ENCODE measurements at regions of chr3 and their contacts with region 1.

Region 1: GRCh38 chr3:42961633-42962032 is 17.5 kb upstream of the GASK1A start:
- DNase-seq: peak in 4 of 5 donors; percentile 33 to 72 (median 47)
- H3K4me3 ChIP-seq: no peak overlapping the region
- H3K27ac ChIP-seq: no peak overlapping the region
- H3K4me1 ChIP-seq: peaks cover 1% of the 10 kb centered on the region
- H3K27me3 ChIP-seq: no peaks in the 10 kb centered on the region
- CTCF ChIP-seq: peak in 2 of 3 donors; percentile 61 to 76
- EP300 ChIP-seq: no peak
- POLR2A ChIP-seq: no peak

Region 2: DNA sequence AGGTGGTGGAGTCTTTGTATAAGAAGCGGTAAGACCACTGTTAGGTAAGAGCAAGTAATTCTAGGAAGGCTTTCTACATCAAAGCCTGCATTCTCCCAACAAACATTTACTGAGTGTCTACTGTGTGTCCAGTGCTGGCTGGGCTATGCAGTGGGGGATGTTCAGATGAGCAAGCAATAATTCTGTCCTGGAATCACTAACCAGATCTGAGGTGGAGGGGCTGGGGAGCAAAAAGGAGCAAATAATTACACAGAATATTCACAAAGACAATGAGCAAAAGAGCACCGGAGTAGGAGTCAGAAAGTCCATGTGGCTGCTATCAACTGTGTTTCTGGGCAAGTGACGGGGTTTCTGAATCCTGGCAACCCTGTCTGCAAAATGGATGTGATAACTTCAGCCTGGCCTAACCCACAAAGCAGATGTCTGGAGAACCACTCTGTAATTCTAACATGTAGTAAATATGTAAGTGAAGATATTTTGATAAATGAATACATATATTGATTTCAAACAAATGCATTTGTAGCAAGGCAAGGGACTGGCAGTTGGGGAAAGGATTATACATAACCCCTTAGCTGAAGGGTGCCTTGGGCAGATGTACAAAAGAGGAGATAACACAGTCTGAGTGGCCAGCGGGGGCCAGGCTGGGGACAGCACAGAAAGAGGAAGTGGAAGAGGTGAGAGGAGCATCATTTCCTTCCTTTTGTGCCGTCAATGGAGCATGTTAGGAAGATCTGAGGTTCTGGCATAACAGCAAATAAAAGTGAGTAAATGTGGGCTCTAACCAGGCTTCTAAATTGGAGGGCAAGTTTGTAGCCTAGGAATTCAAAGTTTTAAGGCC is 114.7 kb before region 1 on chr3:
- intact Hi-C with region 1: no loop called
- DNase-seq: no peak
- H3K4me3 ChIP-seq: no peak overlapping the region
- H3K27ac ChIP-seq: no peak overlapping the region
- H3K4me1 ChIP-seq: peaks cover 3% of the 10 kb centered on the region
- H3K27me3 ChIP-seq: no peaks in the 10 kb centered on the region
- CTCF ChIP-seq: no peak
- EP300 ChIP-seq: no peak
- POLR2A ChIP-seq: no peak

Region 3: DNA sequence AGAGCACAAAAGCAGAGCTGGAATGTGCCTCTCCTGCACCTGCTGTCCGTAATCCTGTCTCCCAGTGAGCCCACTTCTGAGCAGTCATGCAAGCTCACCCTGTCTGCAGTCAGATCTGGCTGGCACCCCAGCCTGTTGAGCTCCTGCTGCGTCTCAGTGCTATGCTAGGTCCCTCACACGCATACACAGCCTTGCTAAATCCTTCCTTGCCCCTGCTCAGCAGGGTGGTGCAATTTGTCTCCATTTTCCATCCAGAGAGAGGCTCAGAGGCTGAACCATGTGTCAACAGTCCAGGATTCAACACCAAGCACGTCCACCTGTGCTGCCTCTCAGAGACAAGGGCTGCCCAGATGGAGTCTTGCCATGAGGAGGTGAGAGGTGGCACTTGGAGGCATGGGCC is 133.2 kb after region 1 on chr3:
- intact Hi-C with region 1: loop called in 1 of 4 experiments (anchors 10 kb)
- DNase-seq: no peak
- H3K4me3 ChIP-seq: no peak overlapping the region
- H3K27ac ChIP-seq: no peak overlapping the region
- H3K4me1 ChIP-seq: peaks cover 5% of the 10 kb centered on the region
- H3K27me3 ChIP-seq: no peaks in the 10 kb centered on the region
- CTCF ChIP-seq: no peak
- EP300 ChIP-seq: no peak
- POLR2A ChIP-seq: no peak

Region 4: DNA sequence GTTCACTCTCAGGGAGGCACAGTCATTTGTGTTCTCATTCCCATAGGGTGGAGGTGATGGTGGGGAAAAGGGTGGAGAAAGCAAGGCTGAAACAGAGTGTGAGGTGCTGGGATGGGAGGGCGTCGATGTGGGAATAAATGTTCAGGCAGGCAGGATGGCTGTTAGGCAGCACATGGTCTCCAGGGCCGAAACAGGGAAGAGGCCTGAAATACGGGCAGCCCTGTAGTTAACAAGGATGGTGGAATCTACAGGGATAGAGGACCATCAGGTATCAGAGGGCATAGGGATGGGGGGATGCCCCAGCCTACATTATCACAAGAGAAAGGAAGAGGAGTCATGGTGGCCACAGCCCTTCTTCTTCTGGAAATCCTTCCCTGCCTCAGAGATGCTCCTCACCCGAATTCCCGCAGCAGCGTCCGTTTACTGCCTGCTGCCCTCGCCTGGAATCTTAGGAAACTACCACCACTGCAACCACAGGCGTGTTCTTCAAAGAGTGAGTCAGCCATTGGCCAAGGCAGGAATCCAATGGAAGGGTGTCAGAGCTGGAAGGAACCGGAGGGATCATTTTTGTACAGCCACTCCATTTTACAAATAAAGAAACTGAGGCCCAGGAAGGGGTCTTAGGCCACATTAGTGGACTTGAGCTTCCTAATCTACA is 194.0 kb after region 1 on chr3:
- intact Hi-C with region 1: loop called (anchors 5 to 10 kb)
- DNase-seq: peak; percentile 52 to 80 (median 77)
- H3K4me3 ChIP-seq: no peak overlapping the region
- H3K27ac ChIP-seq: peak overlapping the region in 1 of 2 donors; percentile 67
- H3K4me1 ChIP-seq: peaks cover 13% of the 10 kb centered on the region
- H3K27me3 ChIP-seq: no peaks in the 10 kb centered on the region
- CTCF ChIP-seq: peak in 2 of 3 donors; percentile 37 to 63
- EP300 ChIP-seq: no peak
- POLR2A ChIP-seq: no peak

Region 5: DNA sequence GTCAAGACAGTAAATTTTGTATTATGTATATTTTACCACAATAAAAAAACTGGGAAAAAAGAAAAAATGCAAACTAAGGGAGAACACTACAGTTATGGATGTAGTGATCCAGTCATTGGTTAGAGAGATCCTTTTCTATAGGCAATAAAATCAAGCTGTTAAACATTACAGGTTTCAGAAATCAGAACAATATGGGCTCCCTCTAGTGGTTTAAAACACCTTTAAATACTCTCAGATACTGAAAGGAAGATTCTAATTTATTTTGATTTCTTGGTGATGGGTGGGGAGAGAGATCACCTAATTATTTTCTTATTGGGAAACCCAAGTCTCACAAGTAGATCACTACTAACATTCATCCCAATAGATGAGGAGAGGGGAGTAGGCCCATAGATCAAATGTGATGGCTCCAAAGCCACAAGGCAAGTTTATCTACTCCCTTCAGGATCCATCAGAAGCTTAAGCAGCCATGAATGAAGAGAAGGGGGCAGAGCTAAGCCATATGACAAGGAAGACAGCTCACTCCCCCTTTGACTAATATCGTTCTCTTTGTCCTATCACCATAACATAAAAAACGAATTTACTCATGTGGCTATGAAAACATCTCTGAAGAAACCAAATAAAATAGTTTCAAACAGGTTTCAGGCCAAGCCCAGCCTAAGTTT is 541.6 kb after region 1 on chr3:
- intact Hi-C with region 1: loop called in 1 of 4 experiments (anchors 10 kb)
- DNase-seq: no peak
- H3K4me3 ChIP-seq: no peak overlapping the region
- H3K27ac ChIP-seq: no peak overlapping the region
- H3K4me1 ChIP-seq: no peaks in the 10 kb centered on the region
- H3K27me3 ChIP-seq: no peaks in the 10 kb centered on the region
- CTCF ChIP-seq: no peak
- EP300 ChIP-seq: no peak
- POLR2A ChIP-seq: no peak